Caco-2 (cell line): ENCODE measurements at regions of chr1 and their contacts with region 1.

Region 1: GRCh38 chr1:231357831-231358354 is 19.8 kb downstream of the SPRTN start:
- DNase-seq: peak in 1 of 2 experiments; percentile 57
- H3K4me3 ChIP-seq: no peak overlapping the region
- H3K4me3 Mint-ChIP-seq: no peak overlapping the region
- H3K27ac Mint-ChIP-seq: no peak overlapping the region
- H3K4me1 ChIP-seq: no peaks in the 10 kb centered on the region
- H3K4me1 Mint-ChIP-seq: no peaks in the 10 kb centered on the region
- H3K27me3 ChIP-seq: no peaks in the 10 kb centered on the region
- H3K27me3 Mint-ChIP-seq: no peaks in the 10 kb centered on the region
- CTCF ChIP-seq: peak; percentile 64 to 76

Region 2: GRCh38 chr1:231315887-231316286 is 42.0 kb before region 1 on chr1:
- CTCF ChIA-PET with region 1: no interaction called
- POLR2A ChIA-PET with region 1: no interaction called
- intact Hi-C with region 1: no loop called
- DNase-seq: peak; percentile 37 to 39
- H3K4me3 ChIP-seq: no peak overlapping the region
- H3K4me3 Mint-ChIP-seq: no peak overlapping the region
- H3K27ac Mint-ChIP-seq: no peak overlapping the region
- H3K4me1 ChIP-seq: no peaks in the 10 kb centered on the region
- H3K4me1 Mint-ChIP-seq: no peaks in the 10 kb centered on the region
- H3K27me3 ChIP-seq: no peaks in the 10 kb centered on the region
- H3K27me3 Mint-ChIP-seq: no peaks in the 10 kb centered on the region
- CTCF ChIP-seq: peak; percentile 35 to 37

Region 3: GRCh38 chr1:231590453-231591198 is 232.7 kb after region 1 on chr1:
- CTCF ChIA-PET with region 1: interaction called, 3 read pairs
- POLR2A ChIA-PET with region 1: no interaction called
- intact Hi-C with region 1: loop called (anchors 1 kb)
- DNase-seq: peak; percentile 54 to 66
- H3K4me3 ChIP-seq: no peak overlapping the region
- H3K4me3 Mint-ChIP-seq: peak overlapping the region; percentile 32
- H3K27ac Mint-ChIP-seq: no peak overlapping the region
- H3K4me1 ChIP-seq: no peaks in the 10 kb centered on the region
- H3K4me1 Mint-ChIP-seq: peaks cover 3% of the 10 kb centered on the region
- H3K27me3 ChIP-seq: no peaks in the 10 kb centered on the region
- H3K27me3 Mint-ChIP-seq: no peaks in the 10 kb centered on the region
- CTCF ChIP-seq: peak; percentile 70 to 80

Region 4: DNA sequence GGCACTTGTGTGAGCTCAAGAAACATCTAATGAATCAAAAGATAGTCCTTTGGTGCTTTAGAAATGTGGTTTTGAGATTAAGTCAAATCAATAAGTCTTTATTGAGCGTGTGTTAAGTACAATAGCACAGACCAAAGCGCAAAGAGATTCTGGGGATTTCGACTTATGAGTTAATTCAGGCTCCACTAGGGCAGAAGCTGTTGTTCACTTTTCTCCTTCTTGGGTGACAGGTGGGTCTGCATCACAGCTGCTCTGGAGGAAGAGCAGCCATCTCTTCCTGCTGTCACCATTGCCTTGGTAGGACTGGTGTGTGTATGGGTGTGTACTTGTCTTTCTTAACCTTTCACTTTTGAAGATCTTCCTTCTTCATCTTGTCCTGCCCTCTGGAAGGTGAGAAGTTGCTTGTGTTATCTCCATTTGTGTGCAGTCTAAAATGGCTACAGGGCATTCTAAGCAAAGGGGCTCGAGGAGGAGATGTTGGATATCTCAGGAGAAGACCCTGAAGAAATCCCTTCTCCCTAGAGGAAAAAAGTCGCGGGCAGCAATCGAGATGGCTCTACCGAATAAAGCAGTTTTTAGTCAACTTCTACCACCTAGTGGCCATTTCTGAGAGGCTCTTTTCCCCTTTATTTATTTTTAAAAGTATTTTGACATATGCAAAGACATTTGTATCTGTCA is 245.8 kb after region 1 on chr1:
- CTCF ChIA-PET with region 1: no interaction called
- POLR2A ChIA-PET with region 1: no interaction called
- intact Hi-C with region 1: loop called (anchors 1 kb)
- DNase-seq: peak; percentile 56 to 69
- H3K4me3 ChIP-seq: peak overlapping the region; percentile 38
- H3K4me3 Mint-ChIP-seq: peak overlapping the region; percentile 79
- H3K27ac Mint-ChIP-seq: peak overlapping the region; percentile 61
- H3K4me1 ChIP-seq: no peaks in the 10 kb centered on the region
- H3K4me1 Mint-ChIP-seq: peaks cover 10% of the 10 kb centered on the region
- H3K27me3 ChIP-seq: no peaks in the 10 kb centered on the region
- H3K27me3 Mint-ChIP-seq: no peaks in the 10 kb centered on the region
- CTCF ChIP-seq: peak; percentile 54 to 77